Right cardiac atrium (tissue), 5 donors: ENCODE measurements at regions of chr7 and their contacts with region 1.

Region 1: DNA sequence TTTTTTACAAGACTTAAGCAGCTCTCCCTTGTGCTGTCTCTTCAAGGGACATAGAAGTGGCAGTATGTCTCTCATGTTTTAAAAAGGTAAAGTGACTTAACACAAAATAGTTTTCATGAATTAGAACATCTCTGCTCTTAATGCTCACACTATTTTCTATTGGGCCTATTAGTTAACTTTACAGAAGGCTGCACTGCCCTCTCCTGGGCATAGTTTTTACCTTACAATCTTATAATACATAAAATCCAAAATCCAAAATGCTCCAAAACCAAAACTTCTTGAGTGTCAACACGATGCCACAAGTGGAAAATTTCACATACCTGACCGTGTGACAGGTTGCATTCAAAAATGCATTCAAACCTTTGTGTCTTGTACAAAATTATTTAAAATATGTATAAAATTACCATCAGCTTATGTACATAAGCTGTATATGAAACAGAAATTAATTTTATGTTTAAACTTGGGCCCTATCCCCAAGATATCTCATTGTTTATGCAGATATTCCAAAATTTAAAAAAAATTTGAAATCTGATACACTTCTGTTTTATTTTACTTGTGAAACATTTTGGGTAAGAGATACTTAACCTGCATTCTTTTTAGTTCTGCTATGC is 25.8 kb downstream of the TES start:
- DNase-seq: peak in 2 of 3 donors; percentile 34 to 63
- ATAC-seq: peak; percentile 48 to 57
- H3K4me3 ChIP-seq: no peak overlapping the region
- H3K27ac ChIP-seq: no peak overlapping the region
- H3K4me1 ChIP-seq: peaks cover 2% of the 10 kb centered on the region
- H3K27me3 ChIP-seq: no peaks in the 10 kb centered on the region

Region 2: DNA sequence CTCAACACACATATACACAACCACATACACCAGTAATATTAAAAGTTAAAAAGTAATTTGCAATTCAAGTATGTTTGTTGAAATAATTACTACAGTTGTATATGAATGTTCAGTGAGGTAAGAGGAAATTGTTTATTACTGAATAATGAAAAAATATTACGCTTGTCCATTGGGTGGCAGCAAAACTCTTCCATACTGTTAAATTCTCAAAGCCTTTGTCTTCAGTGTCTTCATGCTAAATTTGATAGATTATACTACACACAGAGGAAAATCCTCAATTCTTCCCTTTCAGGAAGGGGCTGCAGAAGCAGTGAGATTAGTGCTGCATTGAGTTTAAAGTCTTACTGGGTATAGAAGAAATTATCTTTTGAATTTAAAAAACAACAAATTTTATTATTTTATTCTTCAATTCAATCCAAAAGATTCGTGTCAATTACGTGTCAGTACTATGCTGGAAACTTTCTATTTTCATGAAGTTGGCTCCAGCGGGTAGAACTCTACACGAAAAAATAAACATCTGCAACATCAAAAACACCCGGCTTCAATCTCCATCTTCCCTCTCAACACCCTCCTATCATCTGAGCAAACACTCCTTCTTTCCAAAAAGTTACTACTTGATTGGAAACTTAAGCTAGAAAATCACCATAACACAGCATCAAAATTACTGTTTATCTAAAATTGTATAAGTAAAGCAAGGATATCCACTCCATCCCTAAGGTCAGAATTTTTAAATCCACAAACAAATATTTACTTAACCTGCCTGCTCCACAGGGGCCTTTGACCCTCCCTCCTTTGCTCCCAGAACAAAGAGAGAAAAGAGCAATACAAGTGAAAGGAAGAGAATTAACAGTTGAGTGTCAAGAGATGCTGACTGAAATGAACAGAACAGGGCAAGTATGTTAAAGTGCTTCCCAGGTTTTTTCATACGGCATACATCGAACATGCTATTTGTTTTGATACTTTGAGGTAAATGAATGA is 62.8 kb before region 1 on chr7:
- intact Hi-C with region 1: loop called in 3 of 4 experiments (anchors 5 kb)
- DNase-seq: no peak
- ATAC-seq: peak; percentile 29 to 55
- H3K4me3 ChIP-seq: no peak overlapping the region
- H3K27ac ChIP-seq: no peak overlapping the region
- H3K4me1 ChIP-seq: no peaks in the 10 kb centered on the region
- H3K27me3 ChIP-seq: no peaks in the 10 kb centered on the region

Region 3: GRCh38 chr7:116180302-116180701 is 55.8 kb before region 1 on chr7:
- intact Hi-C with region 1: loop called in 1 of 4 experiments (anchors 5 kb)
- DNase-seq: no peak
- ATAC-seq: peak in 1 of 2 donors; percentile 59
- H3K4me3 ChIP-seq: no peak overlapping the region
- H3K27ac ChIP-seq: no peak overlapping the region
- H3K4me1 ChIP-seq: no peaks in the 10 kb centered on the region
- H3K27me3 ChIP-seq: no peaks in the 10 kb centered on the region

Region 4: DNA sequence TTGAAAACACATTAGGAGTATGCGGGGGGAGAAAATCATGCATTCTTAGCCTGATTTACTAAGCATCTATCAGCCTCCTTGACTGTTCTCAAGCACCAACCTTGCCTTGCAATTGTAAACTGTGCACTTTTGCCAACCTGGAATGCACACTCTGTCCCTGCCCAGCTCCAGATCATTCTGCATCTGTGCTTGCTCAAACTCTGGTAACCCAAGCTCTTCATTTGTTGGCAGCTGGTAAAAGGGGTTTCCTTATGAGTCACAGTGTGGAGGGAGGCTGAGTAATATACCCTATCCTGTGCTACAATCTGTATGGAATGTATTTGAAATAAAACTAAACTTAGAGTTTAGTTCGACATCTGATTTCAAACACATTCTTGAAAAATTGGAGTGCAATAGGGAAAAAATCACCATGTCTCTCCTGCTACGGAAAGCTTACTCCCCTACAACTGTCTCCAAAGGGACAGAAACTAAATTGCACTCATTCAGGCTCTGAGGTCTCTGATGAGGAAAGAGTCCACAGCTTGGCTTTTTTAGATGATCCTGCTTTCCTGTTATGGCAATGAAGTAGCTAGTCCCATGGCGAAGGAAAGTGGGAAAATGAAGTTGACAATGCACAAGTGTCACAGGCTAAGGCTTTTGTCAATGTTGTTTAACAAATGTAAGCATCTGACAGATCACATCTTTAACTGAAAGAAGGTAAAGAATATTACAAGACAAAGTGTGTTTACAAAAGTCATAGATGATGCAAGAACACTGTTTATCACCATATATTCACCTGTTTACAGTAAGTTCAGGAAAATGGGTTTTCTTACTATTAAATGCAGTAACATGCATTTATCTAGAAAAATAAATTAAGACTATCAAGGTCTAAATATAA is 36.1 kb after region 1 on chr7:
- intact Hi-C with region 1: no loop called
- DNase-seq: peak in 2 of 3 donors; percentile 19 to 40
- ATAC-seq: peak; percentile 92 to 97
- H3K4me3 ChIP-seq: no peak overlapping the region
- H3K27ac ChIP-seq: peak overlapping the region; percentile 56
- H3K4me1 ChIP-seq: peaks cover 3% of the 10 kb centered on the region
- H3K27me3 ChIP-seq: no peaks in the 10 kb centered on the region

Region 5: DNA sequence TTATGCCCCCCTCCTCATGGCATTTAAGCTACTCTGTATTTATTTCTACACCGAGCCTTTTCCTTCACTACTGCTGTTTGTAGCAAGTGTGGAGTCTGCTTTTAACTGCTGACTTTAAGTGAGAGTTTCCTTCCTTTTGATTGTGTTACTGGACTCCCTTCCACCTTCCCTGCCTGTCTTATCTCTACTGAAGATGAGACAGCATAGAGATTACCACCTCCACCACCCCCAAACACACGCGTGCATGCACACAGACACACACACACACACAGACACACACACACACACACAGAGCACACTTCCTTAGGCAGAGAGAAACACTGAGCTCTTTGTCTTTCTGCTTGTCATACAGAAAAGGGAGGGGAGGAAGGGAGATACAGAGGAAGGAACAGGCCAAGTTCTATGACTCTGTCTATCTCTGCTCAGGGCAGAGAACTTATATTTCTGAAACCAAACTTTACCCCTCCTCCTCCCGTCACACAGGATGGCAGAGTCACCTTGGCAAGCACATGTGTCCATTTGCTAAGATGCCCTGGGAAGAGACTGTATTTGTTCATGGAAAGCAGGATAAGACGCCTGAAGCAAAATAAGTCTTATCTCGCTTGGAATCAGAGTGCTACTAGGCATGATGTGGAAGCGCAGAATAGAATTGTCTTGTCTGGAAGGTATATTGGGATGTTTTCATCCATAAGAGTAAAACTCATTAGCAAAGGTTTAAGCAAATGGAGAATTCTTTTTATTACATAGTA is 181.6 kb after region 1 on chr7:
- intact Hi-C with region 1: no loop called
- DNase-seq: no peak
- ATAC-seq: peak in 1 of 2 donors; percentile 71
- H3K4me3 ChIP-seq: no peak overlapping the region
- H3K27ac ChIP-seq: peak overlapping the region; percentile 16
- H3K4me1 ChIP-seq: peaks cover 8% of the 10 kb centered on the region
- H3K27me3 ChIP-seq: no peaks in the 10 kb centered on the region